Common myeloid progenitor, CD34-positive (primary cell): ENCODE measurements at regions of chr5 and their contacts with region 1.

Region 1: GRCh38 chr5:139482050-139482889 is at the start of gene STING1:
- DNase-seq: peak; percentile 86 to 93 (median 92)
- H3K4me3 ChIP-seq: peak within 1 kb of the TSS; percentile 40 to 89 (median 79)
- H3K27ac ChIP-seq: peak within 1 kb of the TSS; percentile 81 to 91
- H3K4me1 ChIP-seq: peaks cover 12 to 71% (median 59%) of the 10 kb centered on the region in 4 experiments
- H3K27me3 ChIP-seq: no peaks in the 10 kb centered on the region

Region 2: GRCh38 chr5:139246394-139246793 is 235.9 kb before region 1 on chr5:
- CTCF ChIA-PET with region 1: no interaction called
- POLR2A ChIA-PET with region 1: no interaction called
- DNase-seq: peak; percentile 77 to 94 (median 90)
- H3K4me3 ChIP-seq: peak overlapping the region in 2 of 7 experiments; percentile 49 to 50
- H3K27ac ChIP-seq: peak overlapping the region; percentile 42 to 83
- H3K4me1 ChIP-seq: peaks cover 6 to 36% (median 31%) of the 10 kb centered on the region in 4 experiments
- H3K27me3 ChIP-seq: no peaks in the 10 kb centered on the region

Region 3: DNA sequence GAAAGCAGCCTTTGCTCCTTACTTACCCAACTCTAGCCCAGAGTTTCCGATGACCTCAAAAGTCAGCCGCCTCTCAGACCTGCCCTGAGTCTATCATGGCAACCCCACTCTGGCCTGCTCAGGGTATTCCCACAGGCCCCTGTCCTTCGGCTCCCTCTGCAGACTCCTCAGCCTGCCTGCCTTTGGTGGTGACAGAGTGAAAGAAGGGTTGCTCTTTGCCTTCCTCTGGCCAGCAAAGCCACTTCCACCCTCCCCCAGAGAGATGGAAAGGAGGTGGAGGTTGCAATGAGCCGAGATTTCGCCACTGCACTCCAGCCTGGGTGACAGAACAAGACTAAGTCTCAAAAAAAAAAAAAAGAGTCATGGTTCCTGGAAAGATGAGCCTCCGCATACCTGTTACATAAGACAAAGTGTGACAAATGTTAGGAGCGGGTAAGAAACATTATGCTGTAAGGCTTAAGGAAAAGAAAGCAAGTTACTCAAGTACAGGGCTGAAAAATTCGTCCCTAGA is 13.8 kb before region 1 on chr5:
- CTCF ChIA-PET with region 1: interaction called, 13 read pairs
- POLR2A ChIA-PET with region 1: interaction called, 5 read pairs
- DNase-seq: no peak
- H3K4me3 ChIP-seq: no peak overlapping the region
- H3K27ac ChIP-seq: no peak overlapping the region
- H3K4me1 ChIP-seq: peaks cover 3 to 53% (median 48%) of the 10 kb centered on the region in 4 experiments
- H3K27me3 ChIP-seq: no peaks in the 10 kb centered on the region

Region 4: DNA sequence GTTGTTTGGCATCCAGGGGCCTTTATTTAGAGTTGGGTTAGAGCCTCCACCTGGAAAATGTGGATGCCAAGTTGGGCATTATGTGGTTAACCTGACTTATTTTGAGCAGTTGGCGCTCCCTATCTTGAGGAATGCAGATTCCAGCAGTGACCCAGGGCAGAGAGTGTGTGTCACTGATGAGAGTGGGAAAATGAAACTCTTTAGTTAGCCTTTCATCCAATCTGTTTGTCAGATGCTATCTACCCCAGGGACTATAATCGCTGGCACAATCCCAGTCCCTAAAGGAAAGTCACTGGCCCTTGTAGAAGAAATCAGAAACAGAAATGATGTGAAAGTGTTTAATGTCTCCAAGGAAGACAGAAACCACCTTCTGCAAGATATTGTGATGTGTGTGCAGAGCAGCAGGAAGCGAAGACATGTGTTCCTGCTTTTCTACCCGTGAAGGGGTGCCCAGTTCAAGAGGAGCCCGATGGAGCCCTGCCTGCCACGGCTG is 10.5 kb after region 1 on chr5:
- CTCF ChIA-PET with region 1: interaction called, 28 read pairs
- POLR2A ChIA-PET with region 1: interaction called, 6 read pairs
- DNase-seq: peak in 2 of 3 donors; percentile 55 to 64
- H3K4me3 ChIP-seq: peak overlapping the region in 4 of 7 experiments; percentile 1 to 37 (median 16)
- H3K27ac ChIP-seq: no peak overlapping the region
- H3K4me1 ChIP-seq: peaks cover 8 to 39% (median 24%) of the 10 kb centered on the region in 4 experiments
- H3K27me3 ChIP-seq: no peaks in the 10 kb centered on the region